GM12878 (cell line): ENCODE measurements at regions of chr2 and their contacts with region 1.

Region 1: DNA sequence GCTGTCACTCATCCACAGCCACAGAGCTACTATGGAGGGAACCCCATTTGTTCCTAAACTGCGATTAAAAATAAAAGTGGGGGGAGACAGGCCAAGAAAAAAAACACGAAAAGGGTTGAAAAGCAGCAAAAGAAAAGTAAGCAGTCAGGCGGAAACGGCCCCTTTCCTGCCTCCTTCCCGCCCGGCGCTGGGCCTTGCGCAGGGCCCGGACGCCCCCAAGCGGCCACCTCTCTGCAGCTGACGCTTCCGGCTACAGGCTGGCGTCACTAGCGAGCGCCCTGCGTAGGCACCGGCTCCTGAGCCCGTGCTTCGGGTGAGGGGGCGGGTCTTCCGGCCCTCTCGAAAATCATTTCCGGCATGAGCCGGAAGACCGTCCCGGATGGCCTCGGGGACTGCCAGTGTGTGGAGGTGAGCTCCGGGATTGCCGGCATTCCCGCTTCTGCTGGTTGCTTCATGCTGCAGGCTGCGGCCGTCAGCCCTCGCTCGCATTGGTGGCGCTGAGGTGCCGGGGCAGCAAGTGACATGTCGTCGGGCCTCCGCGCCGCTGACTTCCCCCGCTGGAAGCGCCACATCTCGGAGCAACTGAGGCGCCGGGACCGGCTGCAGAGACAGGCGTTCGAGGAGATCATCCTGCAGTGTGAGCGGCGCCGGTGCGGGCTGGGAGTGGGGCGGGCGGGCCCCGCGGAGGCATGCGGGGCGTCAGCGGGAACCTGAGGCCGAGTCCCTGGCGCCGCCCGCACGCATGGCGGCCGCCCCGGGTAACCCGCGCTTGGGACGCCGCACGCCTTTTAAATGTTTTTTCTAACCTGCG is at the start of gene ATG16L1:
- DNase-seq: peak; percentile 73
- ATAC-seq: peak; percentile 96
- H3K4me3 ChIP-seq: peak within 1 kb of the TSS; percentile 99
- H3K27ac ChIP-seq: peak within 1 kb of the TSS; percentile 95
- H3K4me1 ChIP-seq: peaks cover 4% of the 10 kb centered on the region; the same call in 1 of the 2 replicates
- H3K27me3 ChIP-seq: no peaks in the 10 kb centered on the region
- CTCF ChIP-seq: peak; percentile 93 to 99 (median 98); a peak in 5 of 6 replicates
- EP300 ChIP-seq: no peak
- POLR2A ChIP-seq: peak; percentile 97
- RAD21 ChIP-seq: peak; percentile 98
- polyA plus RNA-seq, gene ATG16L1: 5.2 to 7.8 TPM

Region 2: DNA sequence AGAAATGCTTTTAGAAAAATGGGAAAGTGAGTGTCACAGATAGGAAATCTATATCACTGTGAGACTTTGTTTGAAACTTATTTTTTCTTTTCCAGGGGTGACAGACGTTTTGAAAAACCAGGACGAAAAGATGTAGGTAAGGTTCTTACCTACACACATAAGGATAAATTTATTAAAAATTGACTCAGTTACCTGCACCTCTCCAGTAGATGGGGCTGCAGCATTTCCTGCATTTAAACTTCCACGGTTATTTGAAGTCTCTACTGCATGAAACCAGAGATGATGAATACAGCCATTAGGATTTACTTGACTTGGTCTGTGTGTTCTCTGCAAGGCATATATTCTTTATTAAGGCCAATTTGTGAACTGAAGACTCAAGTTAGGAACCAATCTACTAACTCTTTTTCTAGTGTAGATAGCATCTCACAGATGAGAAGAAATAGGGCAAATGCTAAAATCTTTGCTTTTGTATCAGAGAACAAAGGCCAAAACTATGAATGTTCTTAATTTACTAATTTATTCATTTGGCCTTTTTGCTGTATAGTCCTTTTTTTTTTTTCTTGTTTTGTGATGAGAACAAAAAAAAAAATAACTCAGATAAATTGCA is 490.1 kb before region 1 on chr2:
- CTCF ChIA-PET with region 1: interaction called, 7 read pairs
- POLR2A ChIA-PET with region 1: no interaction called
- RAD21 ChIA-PET with region 1: no interaction called
- SMC1A ChIA-PET with region 1: no interaction called
- in situ Hi-C with region 1: no loop called
- intact Hi-C with region 1: loop called (anchors 10 kb)
- DNase-seq: no peak
- ATAC-seq: peak; percentile 68
- H3K4me3 ChIP-seq: no peak overlapping the region
- H3K27ac ChIP-seq: no peak overlapping the region
- H3K4me1 ChIP-seq: peaks cover under 1% of the 10 kb centered on the region; the same call in 1 of the 2 replicates
- H3K27me3 ChIP-seq: no peaks in the 10 kb centered on the region
- CTCF ChIP-seq: peak; percentile 51 to 73 (median 56); a peak in 5 of 6 replicates
- EP300 ChIP-seq: no peak
- POLR2A ChIP-seq: no peak
- RAD21 ChIP-seq: peak; percentile 65

Region 3: DNA sequence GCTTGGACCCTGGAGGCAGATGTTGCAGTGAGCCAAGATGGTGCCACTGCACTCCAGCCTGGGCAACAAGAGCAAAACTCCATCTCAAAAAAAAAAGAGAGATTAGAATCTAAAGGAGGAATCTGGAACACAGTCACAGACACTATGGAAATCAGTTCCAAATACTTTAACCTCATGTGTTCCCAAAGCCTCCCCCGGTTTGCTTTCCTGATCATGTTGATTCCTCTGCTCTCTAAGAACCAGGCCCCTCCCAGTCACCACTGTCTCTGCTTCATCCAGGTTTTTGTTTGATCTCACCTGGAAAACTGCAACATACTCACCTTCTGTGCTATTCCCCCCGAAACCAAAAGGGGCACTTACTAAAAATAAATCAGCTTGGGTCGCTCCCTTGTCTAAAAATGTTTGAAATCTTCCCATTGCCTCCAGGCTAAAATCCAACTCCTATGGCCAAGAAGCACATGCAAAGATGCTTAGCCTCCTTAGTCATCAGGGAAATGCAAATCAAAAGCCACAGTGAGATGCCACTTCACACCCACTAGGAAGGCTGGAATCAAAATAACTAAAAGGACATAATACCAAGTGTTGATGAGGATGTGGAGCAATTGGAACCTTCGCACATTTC is 225.2 kb before region 1 on chr2:
- CTCF ChIA-PET with region 1: interaction called, 12 read pairs
- POLR2A ChIA-PET with region 1: no interaction called
- RAD21 ChIA-PET with region 1: interaction called, 5 read pairs
- SMC1A ChIA-PET with region 1: interaction called, 11 read pairs
- in situ Hi-C with region 1: no loop called
- intact Hi-C with region 1: no loop called
- DNase-seq: no peak
- ATAC-seq: no peak
- H3K4me3 ChIP-seq: no peak overlapping the region
- H3K27ac ChIP-seq: no peak overlapping the region
- H3K4me1 ChIP-seq: no peaks in the 10 kb centered on the region
- H3K27me3 ChIP-seq: peaks cover 0 to 1% of the 10 kb centered on the region in 2 experiments; a peak in 1 of 4 replicates
- CTCF ChIP-seq: no peak
- EP300 ChIP-seq: no peak
- POLR2A ChIP-seq: no peak
- RAD21 ChIP-seq: no peak

Region 4: DNA sequence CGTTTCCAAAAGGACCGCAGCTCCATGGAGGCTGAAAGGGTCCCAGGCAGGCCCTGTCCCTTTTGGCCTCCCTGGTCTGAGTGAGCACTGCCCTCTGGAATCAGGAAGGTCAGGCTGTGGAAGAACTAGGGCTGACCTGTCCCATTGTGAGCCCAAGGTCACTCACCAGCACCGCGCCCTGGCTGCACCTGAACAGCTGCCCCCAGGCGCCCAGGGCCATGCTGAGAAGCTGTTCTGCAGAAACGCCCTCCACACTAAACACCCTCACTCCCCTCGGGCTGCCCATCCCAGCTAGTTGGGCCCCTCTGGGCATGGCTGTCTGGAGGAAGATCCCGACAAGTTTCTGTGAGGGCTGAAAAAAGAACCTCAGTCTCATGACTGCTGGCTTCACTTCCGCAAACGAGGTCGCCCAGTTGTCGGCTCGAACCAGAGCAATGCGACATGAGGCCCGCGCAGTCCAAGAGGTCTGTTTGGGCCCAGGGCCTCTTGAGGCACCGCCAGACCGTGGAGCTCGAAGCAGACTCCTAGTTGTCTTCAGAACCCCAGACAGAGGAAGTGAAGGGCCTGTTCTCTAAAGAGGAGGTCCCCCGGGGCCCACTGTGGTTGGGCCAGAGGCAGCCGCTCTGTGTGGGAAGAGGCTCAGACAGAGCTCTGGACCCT is 127.0 kb before region 1 on chr2:
- CTCF ChIA-PET with region 1: no interaction called
- POLR2A ChIA-PET with region 1: no interaction called
- RAD21 ChIA-PET with region 1: no interaction called
- SMC1A ChIA-PET with region 1: no interaction called
- in situ Hi-C with region 1: no loop called
- intact Hi-C with region 1: no loop called
- DNase-seq: peak; percentile 46
- ATAC-seq: peak; percentile 94
- H3K4me3 ChIP-seq: peak overlapping the region; percentile 15; the same call in 1 of the 2 replicates
- H3K27ac ChIP-seq: peak overlapping the region; percentile 93
- H3K4me1 ChIP-seq: peaks cover 27% of the 10 kb centered on the region
- H3K27me3 ChIP-seq: no peaks in the 10 kb centered on the region
- CTCF ChIP-seq: no peak
- EP300 ChIP-seq: 0 out of 4 replicates have a peak, but pooled peaks of 1 of the 2 experiments have one; percentile 51
- POLR2A ChIP-seq: peak; percentile 60; the same call in 1 of the 2 replicates
- RAD21 ChIP-seq: no peak

Region 5: DNA sequence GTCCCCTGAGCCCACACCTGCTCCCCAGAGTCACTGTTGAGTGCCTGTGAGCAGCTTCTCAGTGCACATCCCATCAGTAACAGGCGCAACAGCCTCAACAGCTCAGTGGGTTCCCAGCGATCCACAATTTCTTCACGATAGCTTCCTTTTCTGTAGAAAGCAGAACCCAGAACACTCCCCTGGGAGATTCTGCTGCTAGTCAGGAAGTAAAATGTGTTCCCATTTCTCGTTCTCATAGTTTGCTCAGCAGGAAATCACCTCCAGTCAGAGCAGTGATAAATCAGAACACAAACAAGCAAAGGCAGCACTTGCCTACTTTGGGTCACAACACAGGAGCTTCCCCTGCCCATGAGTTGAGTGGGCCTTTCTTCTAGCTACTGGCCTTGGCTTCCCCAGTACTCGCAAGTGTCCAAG is 49.0 kb before region 1 on chr2:
- CTCF ChIA-PET with region 1: interaction called, 12 read pairs
- POLR2A ChIA-PET with region 1: no interaction called
- RAD21 ChIA-PET with region 1: no interaction called
- SMC1A ChIA-PET with region 1: no interaction called
- in situ Hi-C with region 1: no loop called
- intact Hi-C with region 1: loop called (anchors 5 kb)
- DNase-seq: peak; percentile 64
- ATAC-seq: peak; percentile 45
- H3K4me3 ChIP-seq: no peak overlapping the region
- H3K27ac ChIP-seq: peak overlapping the region; percentile 78
- H3K4me1 ChIP-seq: peaks cover 28% of the 10 kb centered on the region
- H3K27me3 ChIP-seq: no peaks in the 10 kb centered on the region
- CTCF ChIP-seq: no peak
- EP300 ChIP-seq: no peak
- POLR2A ChIP-seq: no peak; the same call in 1 of the 2 replicates
- RAD21 ChIP-seq: no peak

Region 6: GRCh38 chr2:233369897-233370685 is 118.6 kb after region 1 on chr2:
- CTCF ChIA-PET with region 1: no interaction called
- POLR2A ChIA-PET with region 1: no interaction called
- RAD21 ChIA-PET with region 1: no interaction called
- SMC1A ChIA-PET with region 1: no interaction called
- in situ Hi-C with region 1: no loop called
- intact Hi-C with region 1: no loop called
- DNase-seq: no peak
- ATAC-seq: no peak
- H3K4me3 ChIP-seq: no peak overlapping the region
- H3K27ac ChIP-seq: no peak overlapping the region
- H3K4me1 ChIP-seq: peaks cover 4% of the 10 kb centered on the region
- H3K27me3 ChIP-seq: no peaks in the 10 kb centered on the region
- CTCF ChIP-seq: no peak
- EP300 ChIP-seq: no peak
- POLR2A ChIP-seq: no peak
- RAD21 ChIP-seq: no peak

Region 7: GRCh38 chr2:233531888-233532458 is 280.5 kb after region 1 on chr2:
- CTCF ChIA-PET with region 1: no interaction called
- POLR2A ChIA-PET with region 1: no interaction called
- RAD21 ChIA-PET with region 1: no interaction called
- SMC1A ChIA-PET with region 1: no interaction called
- in situ Hi-C with region 1: no loop called
- intact Hi-C with region 1: no loop called
- DNase-seq: no peak
- ATAC-seq: no peak
- H3K4me3 ChIP-seq: no peak overlapping the region
- H3K27ac ChIP-seq: no peak overlapping the region
- H3K4me1 ChIP-seq: no peaks in the 10 kb centered on the region
- H3K27me3 ChIP-seq: no peaks in the 10 kb centered on the region
- CTCF ChIP-seq: no peak
- EP300 ChIP-seq: no peak
- POLR2A ChIP-seq: no peak
- RAD21 ChIP-seq: no peak